ENCODE measurements at regions of chr19 and their contacts with region 1.

Region 1: GRCh38 chr19:38333245-38333644 is 2.4 kb upstream of the CATSPERG start:
- DNase-seq: no peak
- H3K4me3 ChIP-seq: no peak overlapping the region
- CTCF ChIP-seq: no peak
- POLR2A ChIP-seq: no peak

Region 2: GRCh38 chr19:38004521-38005223 is 328.6 kb before region 1 on chr19:
- intact Hi-C with region 1: loop called (anchors 5 kb)
- DNase-seq: peak; percentile 93 to 97
- H3K4me3 ChIP-seq: no peak overlapping the region
- CTCF ChIP-seq: no peak
- POLR2A ChIP-seq: no peak

Region 3: GRCh38 chr19:38213911-38214625 is 119.2 kb before region 1 on chr19:
- intact Hi-C with region 1: no loop called
- DNase-seq: no peak
- H3K4me3 ChIP-seq: no peak overlapping the region
- CTCF ChIP-seq: no peak
- POLR2A ChIP-seq: no peak

Region 4: GRCh38 chr19:38239816-38240215 is 93.4 kb before region 1 on chr19:
- intact Hi-C with region 1: loop called (anchors 5 kb)
- DNase-seq: no peak
- H3K4me3 ChIP-seq: no peak overlapping the region
- CTCF ChIP-seq: no peak
- POLR2A ChIP-seq: no peak

Region 5: DNA sequence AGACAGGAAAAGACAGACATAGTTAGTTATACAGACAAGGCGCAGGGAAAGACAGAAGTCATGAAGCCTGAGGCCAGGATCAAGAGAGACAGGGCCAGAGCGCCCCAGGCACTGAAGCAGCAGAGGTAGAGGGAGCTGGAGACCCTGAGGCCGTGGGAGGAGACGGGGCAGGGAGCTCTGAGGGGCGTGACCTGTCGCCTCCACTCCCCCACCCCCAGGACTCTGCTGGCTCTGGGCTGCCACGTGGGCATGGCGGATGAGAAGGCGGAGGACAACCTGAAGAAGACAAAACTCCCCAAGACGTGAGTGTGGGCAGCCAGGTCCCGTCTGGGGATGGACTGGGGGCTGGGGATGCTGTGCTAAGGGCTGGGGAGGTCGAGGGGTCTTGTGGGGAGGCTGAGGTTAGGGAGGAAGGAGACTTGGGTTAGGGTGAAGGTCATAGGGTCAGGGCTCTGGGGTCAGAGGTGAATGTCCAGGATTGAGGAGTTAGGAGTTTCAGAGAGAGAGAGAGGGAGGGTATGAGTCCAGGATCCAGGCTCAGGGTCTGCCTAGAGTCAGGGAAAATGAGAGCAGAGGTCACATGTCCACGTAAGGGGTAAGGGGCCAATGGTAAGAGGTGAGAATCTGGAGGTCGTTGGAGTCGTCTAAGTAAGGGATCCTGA is 131.3 kb after region 1 on chr19:
- intact Hi-C with region 1: no loop called
- DNase-seq: no peak
- H3K4me3 ChIP-seq: no peak overlapping the region
- CTCF ChIP-seq: no peak
- POLR2A ChIP-seq: no peak

Measured in lower leg skin (tissue), 4 donors.